Activated naive CD4-positive, alpha-beta T cell treated with anti-CD3 and anti-CD28 coated beads for 36 hours (primary cell): ENCODE measurements at regions of chr7 and their contacts with region 1.

Region 1: GRCh38 chr7:100604028-100604975 is 2.1 kb downstream of the PCOLCE start:
- DNase-seq: peak; percentile 77
- H3K4me3 Mint-ChIP-seq: peak overlapping the region; percentile 75
- H3K27ac Mint-ChIP-seq: peak overlapping the region; percentile 67
- H3K4me1 Mint-ChIP-seq: peaks cover 12% of the 10 kb centered on the region
- H3K27me3 Mint-ChIP-seq: no peaks in the 10 kb centered on the region

Region 2: DNA sequence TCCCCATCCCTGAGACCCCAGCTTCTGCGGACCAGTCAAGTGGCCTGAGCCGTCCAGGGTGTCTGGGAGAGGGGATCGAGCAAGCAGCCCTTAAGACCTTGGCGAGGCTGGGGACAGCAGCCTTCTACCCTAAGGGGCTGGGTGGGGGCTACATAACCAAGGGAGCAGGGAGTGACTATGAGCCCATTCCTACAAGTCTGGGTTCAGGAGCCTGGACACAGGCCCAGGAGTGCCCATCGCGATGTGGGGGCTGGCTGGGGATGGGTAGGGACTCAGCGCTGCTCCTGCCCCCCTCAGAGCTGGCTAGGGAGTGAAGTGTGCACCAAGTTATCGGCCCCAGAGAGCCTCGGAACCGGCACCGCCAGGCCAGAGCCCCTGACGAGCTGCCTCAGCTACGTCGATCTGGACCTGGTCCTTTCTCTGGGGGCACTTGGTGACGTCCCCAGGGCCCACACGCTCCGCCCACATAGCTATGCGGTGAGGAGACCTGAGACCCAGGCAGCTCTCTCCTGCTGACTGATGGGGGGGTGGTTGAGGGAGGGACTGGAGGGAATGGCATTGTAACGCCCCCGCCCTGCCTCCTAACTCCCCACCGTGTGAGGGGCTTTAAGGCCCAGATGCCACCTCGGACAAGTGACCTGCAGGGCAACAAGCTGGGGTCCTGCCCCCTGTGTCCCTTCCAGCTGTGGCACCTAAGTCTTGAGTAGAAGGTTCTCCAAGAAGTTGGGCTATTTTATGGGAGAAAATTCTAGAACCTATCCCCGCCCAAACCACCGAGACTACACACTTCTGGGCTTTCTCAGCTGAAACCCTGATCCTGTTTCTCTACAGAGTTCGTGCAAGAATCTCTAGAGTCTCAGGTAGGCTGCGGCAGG is 33.1 kb before region 1 on chr7:
- CTCF ChIA-PET with region 1: no interaction called
- intact Hi-C with region 1: loop called (anchors 2 kb)
- DNase-seq: no peak
- H3K4me3 Mint-ChIP-seq: no peak overlapping the region
- H3K27ac Mint-ChIP-seq: no peak overlapping the region
- H3K4me1 Mint-ChIP-seq: peaks cover 22% of the 10 kb centered on the region
- H3K27me3 Mint-ChIP-seq: no peaks in the 10 kb centered on the region

Region 3: GRCh38 chr7:100649826-100650547 is 45.7 kb after region 1 on chr7:
- CTCF ChIA-PET with region 1: no interaction called
- intact Hi-C with region 1: no loop called
- DNase-seq: no peak
- H3K4me3 Mint-ChIP-seq: no peak overlapping the region
- H3K27ac Mint-ChIP-seq: no peak overlapping the region
- H3K4me1 Mint-ChIP-seq: peaks cover 1% of the 10 kb centered on the region
- H3K27me3 Mint-ChIP-seq: peaks cover 14% of the 10 kb centered on the region